Naive thymus-derived CD4-positive, alpha-beta T cell (primary cell): ENCODE measurements at regions of chr19 and their contacts with region 1.

Region 1: DNA sequence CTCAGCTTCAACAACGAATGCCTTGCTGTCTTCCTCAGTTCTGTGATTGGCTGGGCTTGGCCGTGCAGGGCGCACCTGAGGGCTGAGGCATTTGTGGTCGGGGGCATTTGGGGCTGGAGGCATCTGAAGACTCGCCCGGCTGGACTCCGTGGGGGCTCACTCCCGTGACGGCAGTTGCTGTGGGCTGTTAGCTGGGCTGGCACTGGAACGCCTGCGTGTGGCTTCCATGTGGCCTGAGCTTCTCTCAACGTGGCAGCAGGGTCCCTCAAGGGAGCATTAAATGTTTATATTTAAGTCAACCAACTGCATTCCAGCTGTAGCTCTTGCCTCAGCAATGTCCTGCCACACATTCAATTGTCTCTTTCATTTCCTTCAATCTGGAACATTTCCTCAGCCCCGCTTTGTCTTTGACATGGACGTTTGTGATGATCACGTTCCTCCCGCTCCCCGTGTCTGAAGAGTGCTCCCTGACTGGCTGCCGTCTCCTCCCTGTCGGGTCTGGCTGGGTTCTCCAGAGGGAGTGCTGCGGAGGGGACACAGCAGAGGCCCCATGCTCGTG is 21.0 kb downstream of the CCDC8 start:
- DNase-seq: no peak
- ATAC-seq: no peak
- H3K4me3 ChIP-seq: no peak overlapping the region
- H3K4me3 Mint-ChIP-seq: no peak overlapping the region
- H3K27ac ChIP-seq: peak overlapping the region; percentile 19
- H3K27ac Mint-ChIP-seq: peak overlapping the region in 3 of 9 donors; percentile 2 to 51 (median 40)
- H3K4me1 ChIP-seq: no peaks in the 10 kb centered on the region
- H3K4me1 Mint-ChIP-seq: peaks cover 0 to 18% (median 6%) of the 10 kb centered on the region in 7 donors
- H3K27me3 ChIP-seq: no peaks in the 10 kb centered on the region
- H3K27me3 Mint-ChIP-seq: no peaks in the 10 kb centered on the region

Region 2: GRCh38 chr19:46283771-46284170 is 108.6 kb before region 1 on chr19:
- CTCF ChIA-PET with region 1: no interaction called
- POLR2A ChIA-PET with region 1: no interaction called
- intact Hi-C with region 1: loop called (anchors 1 to 2 kb)
- DNase-seq: no peak
- ATAC-seq: no peak
- H3K4me3 ChIP-seq: no peak overlapping the region
- H3K4me3 Mint-ChIP-seq: no peak overlapping the region
- H3K27ac ChIP-seq: no peak overlapping the region
- H3K27ac Mint-ChIP-seq: peak overlapping the region in 1 of 9 donors; percentile 25
- H3K4me1 ChIP-seq: no peaks in the 10 kb centered on the region
- H3K4me1 Mint-ChIP-seq: peaks cover 0 to 3% (median 0%) of the 10 kb centered on the region in 7 donors
- H3K27me3 ChIP-seq: no peaks in the 10 kb centered on the region
- H3K27me3 Mint-ChIP-seq: peaks cover 8 to 11% (median 11%) of the 10 kb centered on the region in 5 donors

Region 3: DNA sequence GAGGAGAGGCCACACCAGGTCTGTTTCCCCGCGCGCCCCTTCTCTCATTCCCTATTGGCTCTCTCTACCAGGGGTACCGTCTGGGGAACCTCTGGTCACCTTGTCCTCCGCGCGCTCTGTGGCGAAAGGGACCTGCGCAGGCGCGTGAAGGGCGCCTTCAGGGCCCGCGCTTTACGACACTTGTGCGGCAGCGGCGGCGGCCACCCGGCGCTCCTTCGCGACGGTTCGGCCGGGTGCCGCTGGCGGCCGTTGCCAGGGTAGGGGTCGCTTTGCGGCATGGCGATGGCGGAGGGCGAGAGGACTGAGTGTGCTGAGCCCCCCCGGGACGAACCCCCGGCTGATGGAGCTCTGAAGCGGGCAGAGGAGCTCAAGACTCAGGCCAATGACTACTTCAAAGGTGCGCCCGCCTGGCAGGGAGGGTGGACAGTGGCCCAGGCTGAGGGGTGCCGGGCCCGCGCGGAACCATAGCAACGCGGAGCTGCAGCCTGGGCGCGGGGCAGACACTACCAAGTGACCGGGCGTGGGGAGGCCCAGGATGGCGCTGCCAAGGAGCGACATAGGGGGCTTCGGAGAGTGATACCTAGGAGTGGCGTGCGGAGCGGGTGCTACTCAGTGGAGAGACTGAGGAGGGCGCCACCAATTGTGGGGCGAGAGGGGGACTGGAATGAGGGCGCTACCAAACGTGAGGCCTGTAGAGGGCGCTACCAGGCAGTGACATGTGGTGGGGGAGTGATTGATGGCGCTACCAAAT is 45.3 kb before region 1 on chr19 and contains the start of gene PPP5C:
- CTCF ChIA-PET with region 1: no interaction called
- POLR2A ChIA-PET with region 1: no interaction called
- intact Hi-C with region 1: loop called (anchors 1 kb)
- DNase-seq: peak; percentile 74 to 89 (median 79)
- ATAC-seq: peak; percentile 90
- H3K4me3 ChIP-seq: peak within 1 kb of the TSS; percentile 73
- H3K4me3 Mint-ChIP-seq: peak within 1 kb of the TSS; percentile 87 to 97 (median 94)
- H3K27ac ChIP-seq: peak within 1 kb of the TSS; percentile 89
- H3K27ac Mint-ChIP-seq: peak within 1 kb of the TSS; percentile 85 to 97 (median 92)
- H3K4me1 ChIP-seq: peaks cover 39 to 43% of the 10 kb centered on the region in 2 donors
- H3K4me1 Mint-ChIP-seq: peaks cover 49 to 63% (median 52%) of the 10 kb centered on the region in 7 donors
- H3K27me3 ChIP-seq: no peaks in the 10 kb centered on the region
- H3K27me3 Mint-ChIP-seq: peaks cover 0 to 23% (median 0%) of the 10 kb centered on the region in 5 donors
- total RNA-seq, gene PPP5C: 41.4 to 107 (median 52.0) TPM

Region 4: DNA sequence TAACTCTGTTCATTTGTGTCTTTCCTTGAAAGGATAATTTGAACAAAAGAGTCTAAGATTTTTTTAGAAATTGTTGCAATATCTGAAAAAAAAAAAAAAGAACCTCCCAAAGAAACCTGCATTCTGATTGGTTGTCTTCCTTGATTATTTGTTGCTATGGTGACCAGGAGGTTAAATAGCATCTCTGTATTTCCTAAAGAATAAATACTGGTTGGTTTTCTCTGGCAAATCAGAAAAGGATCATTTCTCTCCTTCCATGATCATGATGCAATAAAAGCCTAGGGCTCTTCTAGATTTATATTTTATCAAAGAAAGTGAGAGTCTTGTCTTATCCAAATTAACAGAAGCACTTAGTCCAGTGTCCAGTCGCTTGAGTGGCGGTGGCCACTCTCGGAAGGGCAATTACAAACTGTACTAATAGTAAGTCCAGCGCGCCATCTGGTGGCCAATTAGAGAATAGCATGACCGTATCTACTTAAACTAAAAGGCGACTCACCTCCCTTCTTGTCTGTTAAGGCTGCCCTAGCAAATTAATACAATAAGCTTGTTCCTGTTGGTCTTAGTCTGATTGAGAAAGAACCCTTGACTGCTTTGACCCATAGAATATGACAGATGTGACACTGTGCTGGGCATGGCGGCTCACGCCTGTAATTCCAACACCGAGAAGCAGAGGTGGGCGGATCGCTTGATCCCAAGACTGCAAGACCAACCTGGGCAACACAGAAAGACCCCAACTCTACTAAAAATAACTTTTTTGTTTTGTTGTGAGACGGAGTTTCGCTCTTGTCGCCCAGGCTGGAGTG is 150.3 kb after region 1 on chr19:
- CTCF ChIA-PET with region 1: interaction called, 5 read pairs
- POLR2A ChIA-PET with region 1: no interaction called
- intact Hi-C with region 1: loop called in 1 of 2 experiments (anchors 1 kb)
- DNase-seq: peak; percentile 46 to 73 (median 64)
- ATAC-seq: peak; percentile 87
- H3K4me3 ChIP-seq: no peak overlapping the region
- H3K4me3 Mint-ChIP-seq: no peak overlapping the region
- H3K27ac ChIP-seq: no peak overlapping the region
- H3K27ac Mint-ChIP-seq: peak overlapping the region in 2 of 9 donors; percentile 14 to 16
- H3K4me1 ChIP-seq: no peaks in the 10 kb centered on the region
- H3K4me1 Mint-ChIP-seq: peaks cover 2 to 13% (median 5%) of the 10 kb centered on the region in 7 donors
- H3K27me3 ChIP-seq: no peaks in the 10 kb centered on the region
- H3K27me3 Mint-ChIP-seq: peaks cover 0 to 11% (median 0%) of the 10 kb centered on the region in 5 donors